ENCODE measurements at regions of chr7 and their contacts with region 1.

Region 1: DNA sequence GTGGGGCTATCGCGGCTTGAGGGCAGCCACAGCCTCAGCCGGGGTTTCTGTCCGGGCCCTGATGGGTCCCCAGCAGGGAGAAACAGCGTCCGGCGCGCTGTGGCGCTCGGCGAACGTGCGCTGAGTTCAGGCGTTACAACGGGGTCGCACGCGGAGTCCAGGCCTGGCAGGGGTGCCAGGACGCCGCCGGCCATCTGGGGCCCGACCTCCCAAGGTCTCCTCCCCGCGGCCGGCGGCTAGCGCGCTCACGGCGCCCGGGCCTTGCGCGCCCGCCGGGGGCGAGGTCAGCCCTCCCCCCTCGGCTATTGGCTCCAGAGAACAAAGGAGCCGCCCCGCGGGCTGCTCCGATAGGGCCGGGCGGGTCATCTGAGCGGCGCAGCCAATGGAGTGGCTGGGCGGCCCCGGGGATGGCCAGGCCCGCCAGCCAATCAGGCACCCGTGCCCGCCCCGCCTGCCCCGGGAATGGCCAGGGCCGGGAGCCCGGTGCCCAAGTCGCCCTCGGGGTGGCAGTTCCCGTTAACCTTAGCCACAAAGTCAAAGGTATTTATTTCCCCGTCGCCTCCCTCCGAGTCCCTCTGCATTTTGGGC is at the start of gene ZNF775:
- DNase-seq: peak; percentile 92
- H3K4me3 Mint-ChIP-seq: peak within 1 kb of the TSS; percentile 94
- H3K27ac Mint-ChIP-seq: peak within 1 kb of the TSS; percentile 76
- H3K4me1 Mint-ChIP-seq: peaks cover 49% of the 10 kb centered on the region
- H3K27me3 Mint-ChIP-seq: no peaks in the 10 kb centered on the region
- total RNA-seq, gene ZNF775: 4.5 and 5.5 TPM in 2 replicates

Region 2: GRCh38 chr7:149873074-149873969 is 505.6 kb before region 1 on chr7 and contains the start of gene ATP6V0E2:
- intact Hi-C with region 1: loop called (anchors 5 kb)
- DNase-seq: peak; percentile 91
- H3K4me3 Mint-ChIP-seq: peak within 1 kb of the TSS; percentile 89
- H3K27ac Mint-ChIP-seq: peak within 1 kb of the TSS; percentile 90
- H3K4me1 Mint-ChIP-seq: peaks cover 57% of the 10 kb centered on the region
- H3K27me3 Mint-ChIP-seq: no peaks in the 10 kb centered on the region
- total RNA-seq, gene ATP6V0E2: 50.2 and 54.3 TPM in 2 replicates

Region 3: GRCh38 chr7:150317748-150318444 is 61.1 kb before region 1 on chr7:
- intact Hi-C with region 1: no loop called
- DNase-seq: no peak
- H3K4me3 Mint-ChIP-seq: no peak overlapping the region
- H3K27ac Mint-ChIP-seq: no peak overlapping the region
- H3K4me1 Mint-ChIP-seq: peaks cover 26% of the 10 kb centered on the region
- H3K27me3 Mint-ChIP-seq: no peaks in the 10 kb centered on the region

Region 4: DNA sequence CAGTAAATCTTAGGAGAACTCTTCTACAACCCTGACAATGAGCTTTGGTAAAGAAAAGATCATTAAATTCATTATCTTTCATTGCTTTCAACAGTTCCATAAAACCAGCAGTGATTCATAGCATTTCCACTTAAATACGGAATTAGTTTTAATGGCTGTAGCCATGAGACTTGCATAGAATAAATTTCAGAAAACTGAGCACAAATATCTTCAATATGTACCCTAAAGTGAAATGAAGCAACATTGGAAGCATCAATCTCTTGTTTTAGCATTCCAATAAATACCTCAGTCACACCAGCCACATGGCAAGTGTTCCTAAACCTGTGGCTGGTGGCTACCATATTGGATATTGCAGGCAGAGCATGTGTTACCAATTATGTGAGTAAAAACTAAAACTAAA is 33.9 kb before region 1 on chr7:
- intact Hi-C with region 1: no loop called
- DNase-seq: no peak
- H3K4me3 Mint-ChIP-seq: no peak overlapping the region
- H3K27ac Mint-ChIP-seq: no peak overlapping the region
- H3K4me1 Mint-ChIP-seq: peaks cover 5% of the 10 kb centered on the region
- H3K27me3 Mint-ChIP-seq: peaks cover 44% of the 10 kb centered on the region

Region 5: GRCh38 chr7:150356265-150356897 is 22.6 kb before region 1 on chr7:
- intact Hi-C with region 1: loop called (anchors 1 kb)
- DNase-seq: no peak
- H3K4me3 Mint-ChIP-seq: no peak overlapping the region
- H3K27ac Mint-ChIP-seq: no peak overlapping the region
- H3K4me1 Mint-ChIP-seq: peaks cover 33% of the 10 kb centered on the region
- H3K27me3 Mint-ChIP-seq: peaks cover 11% of the 10 kb centered on the region

Region 6: DNA sequence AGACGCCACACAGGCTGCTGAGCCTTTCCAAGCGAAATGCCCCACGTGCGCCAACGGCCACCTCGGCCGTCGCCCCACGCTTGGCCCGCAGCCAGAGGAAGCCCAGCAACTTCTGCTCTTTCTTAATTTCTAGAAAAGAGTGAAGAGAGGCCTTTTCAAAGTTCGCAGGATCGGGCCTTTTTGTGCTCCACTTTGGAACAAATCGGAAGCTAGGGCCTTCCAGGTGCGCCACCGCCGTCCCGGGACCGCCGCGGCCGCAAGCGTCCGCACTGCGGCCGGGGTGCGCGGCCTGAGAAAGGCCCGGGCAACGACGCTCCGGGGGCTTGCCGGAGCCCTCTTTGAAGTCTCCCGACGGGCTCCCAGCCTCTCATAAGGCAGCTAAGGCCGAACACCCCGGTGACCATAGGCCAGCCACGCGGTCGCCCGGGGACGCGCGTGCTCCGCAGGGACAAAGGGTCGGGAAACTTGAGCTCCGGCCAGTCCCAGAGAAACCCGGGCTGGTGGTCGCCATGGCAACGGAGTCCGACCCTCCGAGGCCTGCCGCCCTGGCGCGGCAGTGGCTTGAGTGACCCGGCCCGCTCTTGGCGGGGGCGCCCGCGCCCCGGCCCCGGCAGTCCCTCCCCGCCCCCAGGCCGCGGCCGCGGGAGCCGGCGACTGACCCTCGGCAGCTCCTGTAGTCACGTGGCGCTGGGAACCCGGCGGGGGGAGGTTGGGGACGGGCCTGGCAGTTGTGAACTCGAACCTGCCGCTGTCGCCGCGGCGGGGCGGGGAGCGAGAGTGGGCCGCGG is 10.7 kb before region 1 on chr7 and contains the start of gene REPIN1:
- intact Hi-C with region 1: loop called (anchors 1 kb)
- DNase-seq: peak; percentile 75
- H3K4me3 Mint-ChIP-seq: peak within 1 kb of the TSS; percentile 94
- H3K27ac Mint-ChIP-seq: peak within 1 kb of the TSS; percentile 94
- H3K4me1 Mint-ChIP-seq: peaks cover 36% of the 10 kb centered on the region
- H3K27me3 Mint-ChIP-seq: no peaks in the 10 kb centered on the region
- total RNA-seq, gene REPIN1: 81.5 and 82.2 TPM in 2 replicates

Region 7: GRCh38 chr7:150404805-150405583 is 26.0 kb after region 1 on chr7:
- intact Hi-C with region 1: loop called (anchors 1 kb)
- DNase-seq: peak; percentile 78
- H3K4me3 Mint-ChIP-seq: peak overlapping the region; percentile 88
- H3K27ac Mint-ChIP-seq: peak overlapping the region; percentile 95
- H3K4me1 Mint-ChIP-seq: peaks cover 58% of the 10 kb centered on the region
- H3K27me3 Mint-ChIP-seq: no peaks in the 10 kb centered on the region

Region 8: DNA sequence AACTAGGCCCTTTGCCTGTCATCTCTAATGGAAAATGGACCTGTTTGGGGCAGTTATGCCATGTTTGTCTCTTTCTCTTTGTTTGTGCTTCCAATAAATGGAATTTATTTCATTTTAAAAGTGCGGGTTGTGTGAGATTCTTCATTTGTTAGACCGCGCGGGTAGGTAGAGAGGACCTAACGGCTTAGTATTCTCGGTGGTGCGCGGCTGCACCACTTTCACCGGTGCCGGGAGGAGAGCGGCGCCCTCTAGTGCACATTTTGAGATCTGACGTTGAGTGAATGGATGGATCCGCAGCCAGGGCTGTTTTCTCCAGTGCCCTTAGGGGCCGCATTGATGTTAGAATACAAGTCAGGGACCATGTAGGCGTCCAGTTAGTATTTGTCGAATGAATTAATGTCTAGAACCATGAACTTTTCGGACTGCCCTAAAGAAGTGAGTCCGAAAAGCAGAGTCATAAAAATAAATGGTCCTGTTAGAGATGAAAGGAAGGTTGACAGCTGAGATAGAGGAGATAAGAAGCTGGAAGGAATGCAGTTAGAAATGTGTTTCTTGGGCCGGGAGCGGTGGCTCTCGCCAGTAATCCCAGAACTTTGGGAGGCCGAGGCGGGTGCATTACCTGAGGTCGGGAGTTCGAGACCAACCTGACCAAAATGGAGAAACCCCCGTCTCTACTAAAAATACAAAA is 42.2 kb after region 1 on chr7:
- intact Hi-C with region 1: loop called (anchors 1 kb)
- DNase-seq: peak; percentile 79
- H3K4me3 Mint-ChIP-seq: no peak overlapping the region
- H3K27ac Mint-ChIP-seq: no peak overlapping the region
- H3K4me1 Mint-ChIP-seq: peaks cover 10% of the 10 kb centered on the region
- H3K27me3 Mint-ChIP-seq: peaks cover 2% of the 10 kb centered on the region

Region 9: GRCh38 chr7:150502519-150502918 is 123.6 kb after region 1 on chr7:
- intact Hi-C with region 1: no loop called
- DNase-seq: peak; percentile 31
- H3K4me3 Mint-ChIP-seq: peak overlapping the region; percentile 40
- H3K27ac Mint-ChIP-seq: peak overlapping the region; percentile 81
- H3K4me1 Mint-ChIP-seq: peaks cover 60% of the 10 kb centered on the region
- H3K27me3 Mint-ChIP-seq: no peaks in the 10 kb centered on the region

Region 10: DNA sequence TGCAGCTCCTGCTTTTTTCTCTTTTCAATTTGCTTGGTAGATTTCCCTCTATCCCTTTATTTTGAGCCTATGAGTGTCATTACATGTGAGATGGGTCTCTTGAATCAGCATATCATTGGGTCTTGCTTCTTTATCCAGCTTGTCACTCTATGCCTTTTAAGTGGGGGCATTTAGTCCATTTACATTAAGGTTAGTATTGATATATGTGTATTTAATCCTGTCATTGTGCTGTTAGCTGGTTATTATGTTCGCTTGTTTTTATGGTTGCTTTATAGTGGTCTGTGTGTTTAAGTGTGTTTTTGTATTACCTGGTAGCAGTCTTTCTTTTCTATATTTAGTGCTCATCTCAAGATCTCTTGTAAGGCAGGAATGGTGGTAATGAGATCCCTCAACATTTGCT is 152.8 kb after region 1 on chr7:
- intact Hi-C with region 1: no loop called
- DNase-seq: no peak
- H3K4me3 Mint-ChIP-seq: no peak overlapping the region
- H3K27ac Mint-ChIP-seq: no peak overlapping the region
- H3K4me1 Mint-ChIP-seq: peaks cover 2% of the 10 kb centered on the region
- H3K27me3 Mint-ChIP-seq: no peaks in the 10 kb centered on the region